Panc1 (cell line): ENCODE measurements at regions of chr2 and their contacts with region 1.

Region 1: DNA sequence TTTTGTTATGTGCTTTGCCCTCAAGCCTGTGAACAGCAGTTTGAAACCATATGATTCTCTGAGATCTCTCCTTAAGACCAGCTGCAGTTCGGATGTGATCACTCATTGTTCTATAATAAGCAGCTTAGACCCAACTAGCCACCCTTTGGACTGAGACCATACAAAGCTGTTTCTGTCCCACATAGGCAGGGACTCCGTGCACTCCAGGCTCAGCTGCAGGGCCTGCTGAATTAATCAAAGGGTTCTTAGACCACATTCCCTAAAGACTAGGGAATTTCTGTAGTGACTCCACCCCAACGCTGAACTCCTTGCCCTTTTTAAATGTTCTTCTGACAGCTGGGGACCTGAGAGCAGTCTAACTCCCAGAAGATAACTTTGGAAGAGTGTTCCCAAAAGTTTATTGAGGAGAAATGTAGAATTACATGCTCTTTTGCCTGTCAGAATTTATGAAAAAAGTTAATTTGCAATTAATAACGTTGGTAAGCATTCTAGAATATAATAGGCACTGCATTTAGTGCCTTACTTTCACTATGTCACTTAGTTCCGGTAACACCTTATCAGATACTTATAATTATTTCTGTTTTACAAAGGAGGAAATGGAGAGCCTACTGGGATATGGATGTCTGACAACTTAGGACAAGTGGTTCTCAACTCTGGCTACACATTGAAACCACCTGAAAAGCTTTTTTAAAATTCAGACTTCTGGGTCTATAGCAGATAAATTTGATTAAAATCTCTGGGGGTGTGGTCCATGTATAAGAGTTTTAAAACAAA is 42.3 kb downstream of the GULP1 start:
- DNase-seq: no peak
- ATAC-seq: peak; percentile 53; the same call in 1 of the 2 replicates
- H3K4me3 ChIP-seq: no peak overlapping the region
- H3K27ac ChIP-seq: peak overlapping the region; percentile 73
- H3K4me1 ChIP-seq: peaks cover 16% of the 10 kb centered on the region
- H3K27me3 ChIP-seq: no peaks in the 10 kb centered on the region
- CTCF ChIP-seq: no peak

Region 2: GRCh38 chr2:188318161-188318749 is 15.7 kb before region 1 on chr2:
- CTCF ChIA-PET with region 1: no interaction called
- POLR2A ChIA-PET with region 1: interaction called, 11 read pairs
- in situ Hi-C with region 1: no loop called
- intact Hi-C with region 1: no loop called
- DNase-seq: no peak
- ATAC-seq: peak; percentile 72
- H3K4me3 ChIP-seq: no peak overlapping the region
- H3K27ac ChIP-seq: peak overlapping the region; percentile 74
- H3K4me1 ChIP-seq: peaks cover 45% of the 10 kb centered on the region
- H3K27me3 ChIP-seq: no peaks in the 10 kb centered on the region
- CTCF ChIP-seq: no peak

Region 3: DNA sequence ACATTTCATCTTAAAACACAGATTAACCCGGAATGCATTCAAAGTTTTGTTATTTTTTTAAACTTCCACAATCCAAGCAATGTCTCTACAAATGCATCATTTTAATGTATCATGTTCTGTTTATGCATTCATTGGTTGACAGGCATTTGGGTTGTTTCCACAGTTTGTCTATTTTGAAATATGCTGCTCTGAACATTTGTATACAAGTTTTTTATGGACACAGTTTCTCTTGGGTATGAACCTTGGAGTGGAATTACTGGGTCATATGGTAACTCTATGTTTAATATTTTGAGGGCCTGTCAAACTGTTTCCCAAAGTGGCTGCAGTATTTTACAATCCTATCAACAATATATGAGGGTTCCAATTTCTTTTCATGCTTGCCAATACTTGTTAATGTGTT is 15.1 kb after region 1 on chr2:
- CTCF ChIA-PET with region 1: no interaction called
- POLR2A ChIA-PET with region 1: no interaction called
- in situ Hi-C with region 1: no loop called
- intact Hi-C with region 1: no loop called
- DNase-seq: no peak
- ATAC-seq: no peak
- H3K4me3 ChIP-seq: no peak overlapping the region
- H3K27ac ChIP-seq: no peak overlapping the region
- H3K4me1 ChIP-seq: peaks cover 15% of the 10 kb centered on the region; the same call in 1 of the 2 replicates
- H3K27me3 ChIP-seq: no peaks in the 10 kb centered on the region
- CTCF ChIP-seq: no peak